Activated T-helper 1 cell treated with anti-CD3 and anti-CD28 coated beads, Interleukin-12 subunit alpha, Interleukin-12 subunit beta, Interleukin-2, Interleukin-4 antibody, amounts not matched to agents 30 ng/mL and 10 ng/mL and 1 ng/mL, durations not matched to agents 14 hours and 24 hours and 36 hours (primary cell): ENCODE measurements at regions of chr2 and their contacts with region 1.

Region 1: DNA sequence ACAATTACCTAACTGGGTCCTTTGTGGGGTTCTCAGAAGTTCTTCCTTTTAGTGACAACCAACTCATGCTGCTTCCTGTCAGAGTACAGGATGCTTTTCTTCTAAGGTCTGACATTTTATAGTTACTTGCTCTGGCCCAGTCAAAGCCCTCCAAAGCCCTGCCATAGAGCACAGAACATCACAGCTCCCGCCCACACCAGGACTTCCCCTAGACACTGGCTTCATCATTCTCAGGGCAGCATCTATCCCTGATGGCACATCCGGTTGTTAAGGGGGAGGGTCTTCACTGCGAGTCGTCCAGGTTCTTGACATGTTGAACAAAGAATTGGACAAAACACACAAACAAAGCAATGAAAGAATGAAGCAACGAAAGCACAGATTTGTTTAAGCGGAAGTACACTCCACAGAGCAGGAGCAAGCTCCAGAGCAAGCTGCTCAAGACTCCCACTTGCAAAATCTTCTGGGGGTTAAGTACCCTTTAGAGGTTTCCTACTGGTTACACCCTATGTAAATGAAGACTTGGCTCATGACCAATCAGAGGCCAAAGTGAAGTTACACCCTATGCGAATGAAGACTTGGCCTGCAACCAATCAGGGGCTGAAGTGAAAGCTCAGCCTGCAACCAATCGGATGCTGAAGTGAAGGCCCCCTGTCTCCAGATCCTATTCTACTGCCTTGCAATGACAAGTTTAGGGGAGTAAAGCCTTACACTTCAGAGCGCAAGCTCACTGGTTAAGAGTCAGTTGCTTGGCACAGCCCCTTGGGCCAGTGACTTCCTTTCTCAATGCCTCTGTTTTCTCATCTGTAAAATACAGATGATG is 79.0 kb downstream of the HDAC4 start:
- DNase-seq: peak; percentile 73
- H3K4me3 Mint-ChIP-seq: peak overlapping the region; percentile 76
- H3K27ac Mint-ChIP-seq: peak overlapping the region; percentile 97
- H3K4me1 Mint-ChIP-seq: peaks cover 88% of the 10 kb centered on the region
- H3K27me3 Mint-ChIP-seq: no peaks in the 10 kb centered on the region

Region 2: DNA sequence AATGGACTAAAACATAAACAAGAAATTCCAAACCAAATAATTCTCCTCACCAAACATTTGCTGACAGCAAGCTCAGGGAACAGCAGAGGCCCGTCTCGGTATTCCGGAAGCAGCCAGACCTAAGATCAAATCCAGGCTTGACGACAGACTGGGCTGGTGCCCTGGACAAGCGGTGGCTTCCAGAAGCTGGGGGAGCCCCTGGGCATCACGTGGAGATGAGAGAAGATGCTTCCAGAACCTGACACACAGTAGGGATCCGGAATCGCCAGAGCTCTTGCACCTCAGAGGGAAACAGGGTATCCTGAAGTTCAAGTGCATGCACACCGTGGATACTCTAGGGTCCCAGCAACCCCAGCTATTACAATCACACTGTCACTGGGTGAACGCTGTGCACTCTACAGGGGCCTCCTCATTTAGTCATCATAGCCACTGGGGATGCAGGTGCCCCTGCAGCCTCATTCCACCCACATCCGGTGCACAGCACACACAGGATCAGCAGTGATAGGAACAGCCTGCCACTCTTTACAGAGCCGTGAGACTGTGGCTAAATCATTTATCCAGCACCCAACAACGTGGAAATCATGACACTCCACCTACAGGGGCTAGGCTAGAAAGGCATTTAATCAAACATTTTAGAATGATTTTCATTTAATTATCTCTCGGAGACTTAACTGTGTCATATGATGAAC is 23.5 kb before region 1 on chr2:
- intact Hi-C with region 1: loop called (anchors 1 kb)
- DNase-seq: peak; percentile 72
- H3K4me3 Mint-ChIP-seq: peak overlapping the region; percentile 84
- H3K27ac Mint-ChIP-seq: peak overlapping the region; percentile 91
- H3K4me1 Mint-ChIP-seq: peaks cover 71% of the 10 kb centered on the region
- H3K27me3 Mint-ChIP-seq: peaks cover 2% of the 10 kb centered on the region

Region 3: DNA sequence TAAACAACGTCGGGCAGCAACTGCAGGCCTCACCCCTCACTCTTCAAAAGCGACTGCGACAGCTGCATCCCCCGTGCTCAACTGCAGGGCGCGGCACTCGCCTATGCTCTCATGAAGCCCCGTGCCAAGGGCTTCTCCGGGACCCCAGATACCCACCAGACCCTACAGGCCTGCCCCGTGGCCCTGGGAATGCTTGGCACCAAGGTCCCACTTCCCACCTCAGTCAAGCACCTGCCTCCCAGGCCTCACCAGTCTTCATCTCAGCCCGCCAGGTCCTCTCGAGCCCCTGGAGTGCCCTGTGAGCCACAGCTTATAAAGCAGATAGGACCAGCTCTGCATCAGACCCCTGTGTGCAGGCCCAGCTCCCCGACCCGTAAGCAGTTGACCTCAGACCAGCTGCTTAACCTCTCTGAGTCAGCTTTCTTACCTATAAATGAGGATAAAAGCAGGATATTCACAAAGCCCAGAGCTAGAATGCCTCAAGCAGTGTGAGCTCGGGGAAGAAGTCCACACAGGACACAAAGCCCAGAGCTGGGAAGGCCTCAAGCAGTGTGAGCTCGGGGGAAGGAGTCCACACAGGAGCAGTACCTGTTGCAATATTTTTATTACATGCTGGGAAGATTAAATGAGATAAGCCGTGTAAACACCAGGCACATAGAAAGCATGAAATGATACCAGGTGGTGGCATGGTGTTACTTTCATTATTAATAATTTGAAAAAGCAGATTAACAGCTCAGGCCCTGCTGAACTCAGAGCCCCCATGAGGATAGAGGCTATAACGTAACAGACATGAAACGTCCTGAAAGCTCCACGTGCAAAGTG is 17.9 kb before region 1 on chr2:
- intact Hi-C with region 1: loop called (anchors 1 kb)
- DNase-seq: no peak
- H3K4me3 Mint-ChIP-seq: peak overlapping the region; percentile 40
- H3K27ac Mint-ChIP-seq: peak overlapping the region; percentile 21
- H3K4me1 Mint-ChIP-seq: peaks cover 41% of the 10 kb centered on the region
- H3K27me3 Mint-ChIP-seq: no peaks in the 10 kb centered on the region

Region 4: GRCh38 chr2:239882331-239882732 is 560.5 kb after region 1 on chr2:
- intact Hi-C with region 1: no loop called
- DNase-seq: peak; percentile 24
- H3K4me3 Mint-ChIP-seq: no peak overlapping the region
- H3K27ac Mint-ChIP-seq: no peak overlapping the region
- H3K4me1 Mint-ChIP-seq: peaks cover 6% of the 10 kb centered on the region
- H3K27me3 Mint-ChIP-seq: peaks cover 7% of the 10 kb centered on the region